ENCODE measurements at regions of chr2 and their contacts with region 1.

Region 1: GRCh38 chr2:57516698-57517340 is 529.8 kb upstream of the VRK2 start:
- DNase-seq: peak in 5 of 9 donors; percentile 7 to 25 (median 11)
- ATAC-seq: peak; percentile 52
- H3K4me3 ChIP-seq: no peak overlapping the region
- H3K4me3 Mint-ChIP-seq: no peak overlapping the region
- H3K27ac ChIP-seq: no peak overlapping the region
- H3K27ac Mint-ChIP-seq: no peak overlapping the region
- H3K4me1 ChIP-seq: no peaks in the 10 kb centered on the region
- H3K4me1 Mint-ChIP-seq: no peaks in the 10 kb centered on the region
- H3K27me3 ChIP-seq: no peaks in the 10 kb centered on the region
- H3K27me3 Mint-ChIP-seq: peaks cover 0 to 4% (median 0%) of the 10 kb centered on the region in 5 donors

Region 2: DNA sequence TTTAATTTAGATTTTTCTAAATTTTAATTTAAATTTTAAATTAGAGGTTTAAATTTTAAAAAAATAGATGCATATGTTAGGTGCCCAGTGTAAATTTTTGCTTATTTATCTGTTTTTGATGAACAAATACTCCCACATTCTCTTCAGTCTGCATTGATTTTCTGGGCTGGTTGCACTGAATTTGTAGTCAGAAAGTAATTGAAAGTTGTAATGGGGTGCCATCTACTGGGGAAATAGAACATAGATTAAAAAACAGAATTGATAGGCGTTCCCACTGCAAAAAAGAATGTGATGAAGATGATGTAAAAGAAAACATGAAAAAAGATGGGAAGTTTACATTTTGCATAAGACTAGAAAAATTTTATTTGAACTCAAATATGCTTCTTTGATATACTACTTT is 1384.7 kb before region 1 on chr2:
- CTCF ChIA-PET with region 1: interaction called, 3 read pairs
- POLR2A ChIA-PET with region 1: no interaction called
- intact Hi-C with region 1: loop called in 1 of 2 experiments (anchors 5 kb)
- DNase-seq: peak in 1 of 9 donors; percentile 1
- ATAC-seq: no peak
- H3K4me3 ChIP-seq: no peak overlapping the region
- H3K4me3 Mint-ChIP-seq: no peak overlapping the region
- H3K27ac ChIP-seq: no peak overlapping the region
- H3K27ac Mint-ChIP-seq: no peak overlapping the region
- H3K4me1 ChIP-seq: no peaks in the 10 kb centered on the region
- H3K4me1 Mint-ChIP-seq: no peaks in the 10 kb centered on the region
- H3K27me3 ChIP-seq: no peaks in the 10 kb centered on the region
- H3K27me3 Mint-ChIP-seq: peaks cover 0 to 5% (median 0%) of the 10 kb centered on the region in 5 donors

Region 3: DNA sequence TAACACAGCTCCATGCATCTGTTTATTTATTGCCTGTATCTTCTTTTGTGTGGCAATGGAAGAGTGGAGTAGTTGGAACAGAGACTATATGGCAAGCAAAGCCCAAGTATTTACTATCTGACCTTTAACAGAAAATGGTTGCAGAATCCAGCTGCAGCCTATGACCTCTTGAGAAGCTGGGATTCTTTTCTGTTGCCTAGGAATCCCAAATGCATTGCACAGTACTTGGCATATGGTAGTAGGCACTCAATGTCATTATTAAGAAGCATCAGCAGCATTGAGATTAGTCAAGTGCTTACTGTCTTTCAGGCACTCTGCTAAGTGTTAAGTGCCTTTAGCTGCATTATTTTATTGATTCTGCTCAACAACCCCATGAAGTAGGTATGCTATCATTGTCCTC is 1001.4 kb before region 1 on chr2:
- CTCF ChIA-PET with region 1: no interaction called
- POLR2A ChIA-PET with region 1: no interaction called
- intact Hi-C with region 1: no loop called
- DNase-seq: no peak
- ATAC-seq: no peak
- H3K4me3 ChIP-seq: no peak overlapping the region
- H3K4me3 Mint-ChIP-seq: no peak overlapping the region
- H3K27ac ChIP-seq: no peak overlapping the region
- H3K27ac Mint-ChIP-seq: no peak overlapping the region
- H3K4me1 ChIP-seq: no peaks in the 10 kb centered on the region
- H3K4me1 Mint-ChIP-seq: no peaks in the 10 kb centered on the region
- H3K27me3 ChIP-seq: no peaks in the 10 kb centered on the region
- H3K27me3 Mint-ChIP-seq: no peaks in the 10 kb centered on the region

Region 4: GRCh38 chr2:57527685-57528084 is 10.9 kb after region 1 on chr2:
- CTCF ChIA-PET with region 1: no interaction called
- POLR2A ChIA-PET with region 1: no interaction called
- intact Hi-C with region 1: no loop called
- DNase-seq: no peak
- ATAC-seq: no peak
- H3K4me3 ChIP-seq: no peak overlapping the region
- H3K4me3 Mint-ChIP-seq: no peak overlapping the region
- H3K27ac ChIP-seq: no peak overlapping the region
- H3K27ac Mint-ChIP-seq: no peak overlapping the region
- H3K4me1 ChIP-seq: no peaks in the 10 kb centered on the region
- H3K4me1 Mint-ChIP-seq: no peaks in the 10 kb centered on the region
- H3K27me3 ChIP-seq: no peaks in the 10 kb centered on the region
- H3K27me3 Mint-ChIP-seq: peaks cover 0 to 4% (median 0%) of the 10 kb centered on the region in 5 donors